HepG2 (cell line): ENCODE measurements at regions of chr12 and their contacts with region 1.

Region 1: GRCh38 chr12:9750276-9751203 is 10.2 kb downstream of the CD69 start:
- DNase-seq: peak; percentile 47
- ATAC-seq: peak; percentile 71
- H3K4me3 ChIP-seq: no peak overlapping the region
- H3K27ac ChIP-seq: no peak overlapping the region
- H3K4me1 ChIP-seq: no peaks in the 10 kb centered on the region
- H3K27me3 ChIP-seq: no peaks in the 10 kb centered on the region
- CTCF ChIP-seq: peak; percentile 73
- EP300 ChIP-seq: no peak
- POLR2A ChIP-seq: no peak
- RAD21 ChIP-seq: peak; percentile 33; the same call in 1 of the 2 replicates

Region 2: DNA sequence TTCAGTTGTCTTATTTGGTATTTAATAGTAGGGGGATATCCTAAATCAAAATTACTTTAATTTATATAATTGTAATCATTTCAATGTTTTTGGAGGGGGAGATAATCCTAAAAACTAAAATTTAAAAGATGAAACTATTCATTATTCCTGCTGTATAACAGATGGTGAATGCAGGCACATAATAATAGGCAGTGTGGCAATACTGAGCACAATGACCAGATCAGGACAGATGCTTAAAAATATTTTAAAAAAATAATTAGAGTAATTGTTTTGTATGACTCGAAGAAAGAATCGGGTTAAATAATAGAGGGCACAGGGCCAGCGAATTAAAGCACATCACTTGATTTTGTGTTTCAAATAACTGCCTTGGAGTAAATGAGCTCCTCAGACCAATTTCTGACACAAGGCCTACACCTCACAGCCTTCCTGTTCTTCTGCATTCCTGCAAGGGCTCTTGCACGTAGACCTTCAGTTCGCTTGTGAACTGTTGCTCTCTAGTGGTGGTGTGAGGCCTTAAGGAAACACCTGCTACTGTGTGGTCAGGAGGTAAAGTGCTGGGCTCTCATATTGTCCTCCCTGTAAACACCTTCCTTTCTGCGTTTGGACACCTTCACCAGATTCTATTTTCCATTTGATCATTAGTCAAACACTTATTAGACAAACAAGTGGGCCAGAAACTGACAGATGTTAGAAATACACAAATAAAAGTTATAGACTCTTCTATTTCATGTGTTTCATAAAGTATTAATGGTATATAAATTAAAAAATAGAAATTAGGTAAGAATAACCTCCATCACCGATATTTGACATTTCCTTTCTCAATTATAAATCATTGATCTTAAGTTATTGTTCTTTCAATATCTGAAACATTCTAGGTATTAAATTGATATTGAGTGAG is 47.4 kb after region 1 on chr12:
- CTCF ChIA-PET with region 1: interaction called, 10 read pairs
- POLR2A ChIA-PET with region 1: no interaction called
- in situ Hi-C with region 1: no loop called
- intact Hi-C with region 1: loop called (anchors 1 kb)
- DNase-seq: peak; percentile 41
- ATAC-seq: peak; percentile 96
- H3K4me3 ChIP-seq: no peak overlapping the region
- H3K27ac ChIP-seq: no peak overlapping the region
- H3K4me1 ChIP-seq: no peaks in the 10 kb centered on the region
- H3K27me3 ChIP-seq: 0 out of 5 replicates have a peak, but pooled peaks cover 0 to 6% of the 10 kb centered on the region in 2 experiments
- CTCF ChIP-seq: peak; percentile 73
- EP300 ChIP-seq: no peak
- POLR2A ChIP-seq: no peak
- RAD21 ChIP-seq: no peak

Region 3: GRCh38 chr12:9864913-9865675 is 114.6 kb after region 1 on chr12:
- CTCF ChIA-PET with region 1: no interaction called
- POLR2A ChIA-PET with region 1: no interaction called
- in situ Hi-C with region 1: no loop called
- intact Hi-C with region 1: no loop called
- DNase-seq: no peak
- ATAC-seq: no peak
- H3K4me3 ChIP-seq: no peak overlapping the region
- H3K27ac ChIP-seq: no peak overlapping the region
- H3K4me1 ChIP-seq: peaks cover 6% of the 10 kb centered on the region; the same call in 1 of the 2 replicates
- H3K27me3 ChIP-seq: no peaks in the 10 kb centered on the region
- CTCF ChIP-seq: no peak
- EP300 ChIP-seq: no peak
- POLR2A ChIP-seq: no peak
- RAD21 ChIP-seq: no peak

Region 4: DNA sequence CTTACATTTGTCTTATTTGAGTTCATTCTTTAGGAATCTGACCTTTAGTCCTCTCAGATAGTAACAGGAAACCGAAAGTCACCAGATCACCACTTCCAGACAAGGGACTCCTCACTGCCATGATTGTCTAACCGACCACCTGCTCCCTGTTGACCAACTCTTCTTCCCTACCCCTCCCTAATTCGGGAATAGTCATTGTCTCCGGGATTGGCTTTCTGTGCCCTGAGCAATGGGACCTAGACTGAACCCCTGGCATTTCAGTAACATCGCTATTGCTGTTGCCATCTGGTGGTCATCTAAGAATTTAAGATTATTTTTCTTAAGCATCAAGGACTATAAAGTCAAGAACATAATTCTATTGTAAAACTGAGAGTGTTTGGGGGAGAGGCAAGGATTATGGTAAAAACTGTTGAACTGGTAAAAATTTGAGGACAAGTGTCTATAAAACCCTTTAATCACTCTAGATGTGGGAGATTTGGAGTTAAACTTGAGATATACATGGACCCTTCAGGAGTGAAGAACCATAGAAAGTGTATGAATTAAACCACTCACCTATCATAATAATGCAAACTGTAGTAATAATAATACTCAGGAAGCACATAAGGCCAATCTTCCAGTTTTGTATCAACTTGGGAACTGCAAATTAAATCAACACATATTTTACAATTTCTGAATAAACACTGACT is 175.3 kb after region 1 on chr12:
- CTCF ChIA-PET with region 1: interaction called, 19 read pairs
- POLR2A ChIA-PET with region 1: no interaction called
- in situ Hi-C with region 1: loop called (anchors 5 kb)
- intact Hi-C with region 1: loop called (anchors 1 kb)
- DNase-seq: peak; percentile 9
- ATAC-seq: peak; percentile 64
- H3K4me3 ChIP-seq: peak overlapping the region in 1 of 3 experiments; percentile 29; a peak in 1 of 6 replicates
- H3K27ac ChIP-seq: no peak overlapping the region
- H3K4me1 ChIP-seq: no peaks in the 10 kb centered on the region
- H3K27me3 ChIP-seq: no peaks in the 10 kb centered on the region
- CTCF ChIP-seq: peak; percentile 56
- EP300 ChIP-seq: no peak
- POLR2A ChIP-seq: no peak
- RAD21 ChIP-seq: no peak

Region 5: DNA sequence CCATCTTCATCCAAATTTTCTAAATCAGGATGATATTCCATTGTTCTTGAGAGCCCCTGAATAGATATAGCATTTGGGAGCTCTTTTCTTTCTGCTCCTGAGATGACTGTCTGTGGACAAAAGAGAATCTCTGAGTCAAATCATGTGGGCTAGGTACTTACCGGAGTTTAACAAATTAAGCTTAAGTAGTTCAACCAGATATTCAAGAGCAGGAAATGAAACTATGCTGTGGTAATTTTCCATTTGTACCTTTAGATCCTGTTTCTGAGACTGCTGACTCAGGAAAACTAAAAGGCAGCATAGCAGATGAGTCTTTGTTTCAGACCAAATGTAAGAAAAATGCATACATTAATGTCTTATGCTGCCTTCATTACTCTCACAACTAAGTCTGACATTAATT is 379.5 kb after region 1 on chr12 and contains the start of gene CLEC7A:
- CTCF ChIA-PET with region 1: no interaction called
- POLR2A ChIA-PET with region 1: no interaction called
- in situ Hi-C with region 1: loop called (anchors 10 kb)
- intact Hi-C with region 1: no loop called
- DNase-seq: no peak
- ATAC-seq: no peak
- H3K4me3 ChIP-seq: no peak within 1 kb of the TSS
- H3K27ac ChIP-seq: no peak within 1 kb of the TSS
- H3K4me1 ChIP-seq: no peaks in the 10 kb centered on the region
- H3K27me3 ChIP-seq: peaks cover 0 to 11% of the 10 kb centered on the region in 2 experiments; a peak in 1 of 5 replicates
- CTCF ChIP-seq: no peak
- EP300 ChIP-seq: no peak
- POLR2A ChIP-seq: no peak
- RAD21 ChIP-seq: no peak
- total RNA-seq, gene CLEC7A: not detected in 2 replicates

Region 6: GRCh38 chr12:10140001-10140400 is 389.5 kb after region 1 on chr12:
- CTCF ChIA-PET with region 1: interaction called, 8 read pairs
- POLR2A ChIA-PET with region 1: no interaction called
- in situ Hi-C with region 1: loop called (anchors 10 kb)
- intact Hi-C with region 1: loop called (anchors 1 kb)
- DNase-seq: peak; percentile 35
- ATAC-seq: peak; percentile 29; the same call in 1 of the 3 replicates
- H3K4me3 ChIP-seq: no peak overlapping the region
- H3K27ac ChIP-seq: no peak overlapping the region
- H3K4me1 ChIP-seq: 0 out of 2 replicates have a peak, but pooled peaks cover 6% of the 10 kb centered on the region
- H3K27me3 ChIP-seq: no peaks in the 10 kb centered on the region; a peak in 1 of 5 replicates
- CTCF ChIP-seq: peak; percentile 69
- EP300 ChIP-seq: no peak
- POLR2A ChIP-seq: no peak
- RAD21 ChIP-seq: 0 out of 2 replicates have a peak, but pooled peaks have one; percentile 32